T-cell (primary cell): ENCODE measurements at regions of chr11 and their contacts with region 1.

Region 1: DNA sequence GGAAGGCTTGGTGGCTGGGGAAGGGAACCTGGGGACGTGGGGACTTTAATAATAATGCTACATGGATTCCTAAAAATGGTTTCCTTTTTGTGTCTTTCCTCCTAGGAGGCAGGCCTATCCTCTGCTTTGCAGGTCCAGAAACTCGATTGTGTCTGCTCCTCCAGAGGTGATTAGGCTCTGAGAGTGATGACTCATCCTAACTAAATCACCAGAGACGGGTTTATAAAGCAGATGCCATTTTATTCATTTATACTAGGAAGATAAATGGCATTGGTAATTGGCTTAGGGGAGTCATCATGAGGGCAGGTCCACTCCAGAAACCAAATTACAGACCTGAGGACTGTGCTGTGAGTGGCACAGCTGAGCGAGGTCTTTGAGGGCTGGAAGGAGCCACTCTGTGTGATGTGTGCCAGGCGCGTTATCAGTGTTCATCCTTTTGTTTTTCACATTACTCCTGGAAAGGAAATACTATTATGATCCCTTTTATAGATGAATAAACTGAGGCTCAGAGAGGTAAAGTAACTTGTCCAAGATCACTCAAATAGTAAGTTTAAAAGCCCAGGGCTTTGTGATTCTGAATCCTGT is 7.1 kb downstream of the NLRX1 start:
- DNase-seq: no peak
- ATAC-seq: no peak
- H3K4me3 ChIP-seq: no peak overlapping the region
- H3K4me3 Mint-ChIP-seq: no peak overlapping the region
- H3K27ac ChIP-seq: no peak overlapping the region
- H3K27ac Mint-ChIP-seq: no peak overlapping the region
- H3K4me1 ChIP-seq: peaks cover 9 to 16% of the 10 kb centered on the region in 2 experiments
- H3K4me1 Mint-ChIP-seq: peaks cover 6 to 15% (median 13%) of the 10 kb centered on the region in 3 donors
- H3K27me3 ChIP-seq: no peaks in the 10 kb centered on the region
- H3K27me3 Mint-ChIP-seq: no peaks in the 10 kb centered on the region

Region 2: GRCh38 chr11:119134389-119134978 is 41.1 kb before region 1 on chr11:
- CTCF ChIA-PET with region 1: no interaction called
- POLR2A ChIA-PET with region 1: no interaction called
- DNase-seq: no peak
- ATAC-seq: peak in 2 of 4 experiments; percentile 16 to 42
- H3K4me3 ChIP-seq: no peak overlapping the region
- H3K4me3 Mint-ChIP-seq: no peak overlapping the region
- H3K27ac ChIP-seq: no peak overlapping the region
- H3K27ac Mint-ChIP-seq: no peak overlapping the region
- H3K4me1 ChIP-seq: no peaks in the 10 kb centered on the region
- H3K4me1 Mint-ChIP-seq: peaks cover 0 to 3% (median 2%) of the 10 kb centered on the region in 3 donors
- H3K27me3 ChIP-seq: no peaks in the 10 kb centered on the region
- H3K27me3 Mint-ChIP-seq: peaks cover 0 to 8% of the 10 kb centered on the region in 2 donors

Region 3: DNA sequence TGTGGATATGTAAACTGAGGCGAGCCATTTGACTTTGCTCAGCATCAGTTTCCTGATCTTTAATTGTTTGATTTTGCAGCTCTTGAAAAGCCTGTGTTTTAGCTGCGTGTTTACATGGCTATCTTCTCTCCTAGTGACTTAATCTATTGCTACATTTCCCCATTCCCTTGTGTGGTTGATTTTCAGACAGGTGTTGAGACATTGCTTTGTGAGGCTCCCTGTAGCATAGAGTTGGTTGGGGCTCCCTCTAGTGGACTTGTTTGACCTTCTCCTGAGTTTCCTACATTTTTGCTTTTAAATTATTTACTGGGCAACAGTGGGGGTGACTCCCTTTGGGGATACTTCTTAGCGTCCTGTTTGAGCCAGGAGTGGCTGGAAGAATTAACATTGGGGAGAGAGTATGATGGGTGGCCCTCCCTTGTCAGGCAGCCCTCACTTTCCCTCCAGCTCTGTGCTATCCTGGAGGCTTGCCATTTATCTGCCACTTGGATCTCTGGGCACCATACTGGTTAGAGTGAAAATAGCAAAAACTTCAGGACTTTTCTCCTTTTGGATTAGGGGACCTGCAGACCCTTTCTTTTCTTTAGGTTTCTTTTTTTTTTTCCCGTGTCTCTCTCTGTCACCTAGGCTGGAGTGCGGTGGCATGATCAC is 21.4 kb after region 1 on chr11:
- CTCF ChIA-PET with region 1: interaction called in 1 of 2 experiments, 11 read pairs
- POLR2A ChIA-PET with region 1: no interaction called
- DNase-seq: peak; percentile 12 to 90 (median 60)
- ATAC-seq: peak; percentile 92 to 97 (median 94)
- H3K4me3 ChIP-seq: no peak overlapping the region
- H3K4me3 Mint-ChIP-seq: no peak overlapping the region
- H3K27ac ChIP-seq: no peak overlapping the region
- H3K27ac Mint-ChIP-seq: no peak overlapping the region
- H3K4me1 ChIP-seq: peaks cover 0 to 2% of the 10 kb centered on the region in 2 experiments
- H3K4me1 Mint-ChIP-seq: peaks cover 0 to 7% (median 3%) of the 10 kb centered on the region in 3 donors
- H3K27me3 ChIP-seq: peaks cover 0 to 5% of the 10 kb centered on the region in 2 experiments
- H3K27me3 Mint-ChIP-seq: peaks cover 0 to 1% of the 10 kb centered on the region in 2 donors